ENCODE measurements at regions of chr6 and their contacts with region 1.

Region 1: DNA sequence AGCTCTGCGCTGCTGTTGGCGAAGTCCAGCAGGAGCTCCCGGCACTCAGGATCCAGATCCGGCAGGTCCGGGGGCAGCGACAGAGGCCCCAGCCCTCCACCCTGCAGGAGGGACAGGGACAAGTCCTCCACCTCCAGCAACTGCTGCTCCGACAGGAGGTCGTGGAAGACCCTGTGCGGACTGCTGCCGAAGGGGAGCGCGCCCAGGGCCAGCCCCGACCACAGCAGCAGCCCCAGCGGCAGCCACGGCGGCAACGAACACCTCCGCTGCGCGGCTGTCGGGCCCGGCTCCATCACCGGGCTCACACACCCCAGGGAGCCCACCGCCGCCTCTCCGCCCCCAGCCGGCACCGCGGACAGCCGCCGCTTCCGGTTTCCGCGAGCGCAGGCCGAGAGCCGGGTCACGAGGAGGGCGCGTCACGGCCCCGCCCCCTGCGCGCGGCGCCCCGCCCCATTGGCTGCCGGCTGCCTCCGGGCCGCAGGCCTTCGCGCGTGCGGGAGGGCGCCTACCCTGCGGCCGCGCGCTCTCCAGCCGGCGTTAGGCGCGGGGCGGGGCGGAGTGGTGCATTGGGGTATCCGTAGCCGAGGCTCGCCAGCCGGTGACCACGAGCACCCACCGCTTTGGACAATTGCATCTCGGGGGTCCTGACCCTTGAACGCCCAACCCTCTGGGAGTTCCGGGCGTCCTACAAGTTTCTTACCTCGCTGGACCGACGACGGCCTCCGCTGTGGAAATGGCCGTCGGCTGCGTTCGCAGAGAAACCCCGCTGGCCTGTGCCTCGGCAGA is at the start of gene OSTM1:
- DNase-seq: peak; percentile 84 to 97 (median 94)
- ATAC-seq: peak; percentile 94
- H3K4me3 ChIP-seq: peak within 1 kb of the TSS; percentile 99
- H3K4me3 Mint-ChIP-seq: peak within 1 kb of the TSS; percentile 93
- H3K27ac ChIP-seq: peak within 1 kb of the TSS; percentile 50 to 64
- H3K27ac Mint-ChIP-seq: peak within 1 kb of the TSS; percentile 91
- H3K4me1 ChIP-seq: peaks cover 22% of the 10 kb centered on the region
- H3K4me1 Mint-ChIP-seq: peaks cover 27% of the 10 kb centered on the region
- H3K27me3 ChIP-seq: no peaks in the 10 kb centered on the region
- H3K27me3 Mint-ChIP-seq: peaks cover 6% of the 10 kb centered on the region
- CTCF ChIP-seq: no peak
- total RNA-seq, gene OSTM1: 16.3 to 20.9 TPM

Region 2: GRCh38 chr6:107021446-107022185 is 1052.9 kb before region 1 on chr6:
- CTCF ChIA-PET with region 1: no interaction called
- POLR2A ChIA-PET with region 1: no interaction called
- intact Hi-C with region 1: loop called in 1 of 2 experiments (anchors 10 kb)
- DNase-seq: no peak
- ATAC-seq: no peak
- H3K4me3 ChIP-seq: no peak overlapping the region
- H3K4me3 Mint-ChIP-seq: no peak overlapping the region
- H3K27ac ChIP-seq: no peak overlapping the region
- H3K27ac Mint-ChIP-seq: no peak overlapping the region
- H3K4me1 ChIP-seq: no peaks in the 10 kb centered on the region
- H3K4me1 Mint-ChIP-seq: no peaks in the 10 kb centered on the region
- H3K27me3 ChIP-seq: no peaks in the 10 kb centered on the region
- H3K27me3 Mint-ChIP-seq: no peaks in the 10 kb centered on the region
- CTCF ChIP-seq: no peak

Region 3: GRCh38 chr6:107716688-107717089 is 357.9 kb before region 1 on chr6:
- CTCF ChIA-PET with region 1: no interaction called
- POLR2A ChIA-PET with region 1: no interaction called
- intact Hi-C with region 1: loop called in 1 of 2 experiments (anchors 10 kb)
- DNase-seq: peak; percentile 49 to 95 (median 66)
- ATAC-seq: peak; percentile 91
- H3K4me3 ChIP-seq: no peak overlapping the region
- H3K4me3 Mint-ChIP-seq: peak overlapping the region; percentile 75
- H3K27ac ChIP-seq: peak overlapping the region in 1 of 2 donors; percentile 63
- H3K27ac Mint-ChIP-seq: peak overlapping the region; percentile 91
- H3K4me1 ChIP-seq: peaks cover 76% of the 10 kb centered on the region
- H3K4me1 Mint-ChIP-seq: peaks cover 77% of the 10 kb centered on the region
- H3K27me3 ChIP-seq: no peaks in the 10 kb centered on the region
- H3K27me3 Mint-ChIP-seq: no peaks in the 10 kb centered on the region
- CTCF ChIP-seq: no peak

Region 4: GRCh38 chr6:108260809-108261569 is 186.4 kb after region 1 on chr6 and contains the start of gene SNX3:
- CTCF ChIA-PET with region 1: no interaction called
- POLR2A ChIA-PET with region 1: no interaction called
- intact Hi-C with region 1: loop called in 1 of 2 experiments (anchors 2 kb)
- DNase-seq: peak; percentile 71 to 95 (median 83)
- ATAC-seq: peak; percentile 80
- H3K4me3 ChIP-seq: peak within 1 kb of the TSS; percentile 98
- H3K4me3 Mint-ChIP-seq: peak within 1 kb of the TSS; percentile 88
- H3K27ac ChIP-seq: peak within 1 kb of the TSS; percentile 88 to 90
- H3K27ac Mint-ChIP-seq: peak within 1 kb of the TSS; percentile 91
- H3K4me1 ChIP-seq: peaks cover 34% of the 10 kb centered on the region
- H3K4me1 Mint-ChIP-seq: peaks cover 36% of the 10 kb centered on the region
- H3K27me3 ChIP-seq: no peaks in the 10 kb centered on the region
- H3K27me3 Mint-ChIP-seq: no peaks in the 10 kb centered on the region
- CTCF ChIP-seq: no peak
- total RNA-seq, gene SNX3: 39.8 to 40.8 TPM

Region 5: DNA sequence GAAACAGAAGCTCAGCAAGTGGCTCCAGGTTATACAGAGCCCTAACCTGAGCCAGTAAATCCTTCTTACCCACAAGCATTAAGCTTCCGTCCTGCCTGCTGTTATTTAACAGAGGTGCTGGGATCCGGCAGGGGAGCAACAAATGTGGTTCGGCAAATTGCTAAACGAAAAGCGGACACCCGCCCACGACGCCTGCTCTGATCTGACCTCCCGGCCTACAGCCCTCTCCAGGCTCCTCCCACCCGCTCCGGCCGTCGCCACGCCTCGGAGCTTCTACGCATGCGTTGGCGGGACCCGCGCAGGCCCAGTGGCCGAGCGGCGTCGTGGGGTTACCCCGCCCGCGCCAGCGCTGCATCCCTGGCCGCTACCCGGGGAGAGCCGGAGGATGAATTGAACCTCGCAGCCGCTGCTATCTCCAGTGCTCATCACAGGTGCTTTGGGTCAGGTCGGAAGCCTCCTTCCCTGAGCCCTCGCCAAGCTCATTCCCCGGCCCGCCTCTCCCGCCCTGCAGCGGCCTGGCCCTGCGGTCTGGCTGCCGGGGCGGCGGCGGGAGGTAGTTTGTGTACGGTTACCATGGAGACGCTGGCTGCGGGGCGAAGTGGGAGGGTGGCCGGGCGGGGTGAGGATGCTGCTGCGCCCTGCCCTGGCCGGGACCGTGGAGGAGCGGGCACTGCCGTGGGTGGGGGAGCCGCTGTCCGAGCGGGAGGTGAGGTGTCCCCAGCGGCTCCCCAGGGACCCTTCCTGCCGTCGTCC is 773.7 kb after region 1 on chr6 and contains the start of gene ARMC2:
- CTCF ChIA-PET with region 1: no interaction called
- POLR2A ChIA-PET with region 1: no interaction called
- intact Hi-C with region 1: loop called in 1 of 2 experiments (anchors 10 kb)
- DNase-seq: peak; percentile 69 to 94 (median 80)
- ATAC-seq: peak; percentile 78
- H3K4me3 ChIP-seq: peak within 1 kb of the TSS; percentile 67
- H3K4me3 Mint-ChIP-seq: peak within 1 kb of the TSS; percentile 92
- H3K27ac ChIP-seq: peak within 1 kb of the TSS; percentile 54 to 61
- H3K27ac Mint-ChIP-seq: peak within 1 kb of the TSS; percentile 88
- H3K4me1 ChIP-seq: peaks cover 16% of the 10 kb centered on the region
- H3K4me1 Mint-ChIP-seq: peaks cover 35% of the 10 kb centered on the region
- H3K27me3 ChIP-seq: no peaks in the 10 kb centered on the region
- H3K27me3 Mint-ChIP-seq: no peaks in the 10 kb centered on the region
- CTCF ChIP-seq: no peak
- total RNA-seq, gene ARMC2: 5.2 to 5.7 TPM

Measured in CD4-positive, alpha-beta T cell (primary cell).